Activated CD4-positive, alpha-beta memory T cell treated with anti-CD3 and anti-CD28 coated beads for 36 hours (primary cell): ENCODE measurements at regions of chr7 and their contacts with region 1.

Region 1: DNA sequence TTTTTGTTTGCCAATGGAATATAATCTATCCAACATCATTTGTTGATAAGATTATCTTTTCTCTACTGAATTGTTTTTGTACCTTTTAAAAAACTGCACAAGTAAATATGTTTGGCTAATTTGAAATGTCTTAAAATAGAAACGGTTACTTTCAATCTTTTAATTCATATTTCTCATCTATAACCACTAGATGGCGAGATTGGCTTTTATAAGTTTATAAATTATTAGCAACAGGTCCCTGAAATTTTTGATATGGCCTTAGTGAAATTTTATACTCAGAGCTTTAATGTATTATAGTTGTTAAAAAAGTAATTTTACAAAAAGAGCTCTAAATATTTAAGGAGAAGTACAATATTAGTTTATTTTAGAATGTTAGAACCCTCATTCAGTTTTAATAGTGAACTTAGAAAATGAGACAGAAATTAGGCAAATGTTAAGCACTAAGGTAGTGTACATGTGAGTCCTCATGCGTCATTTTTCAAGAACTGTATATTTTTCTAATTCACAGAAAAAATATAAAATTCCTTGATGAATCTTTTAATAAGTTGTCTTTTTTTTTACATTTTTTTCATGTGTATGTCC is 592.5 kb downstream of the ARL4A start:
- DNase-seq: no peak
- H3K4me3 Mint-ChIP-seq: no peak overlapping the region
- H3K27ac Mint-ChIP-seq: no peak overlapping the region
- H3K4me1 Mint-ChIP-seq: no peaks in the 10 kb centered on the region
- H3K27me3 Mint-ChIP-seq: peaks cover 8% of the 10 kb centered on the region

Region 2: DNA sequence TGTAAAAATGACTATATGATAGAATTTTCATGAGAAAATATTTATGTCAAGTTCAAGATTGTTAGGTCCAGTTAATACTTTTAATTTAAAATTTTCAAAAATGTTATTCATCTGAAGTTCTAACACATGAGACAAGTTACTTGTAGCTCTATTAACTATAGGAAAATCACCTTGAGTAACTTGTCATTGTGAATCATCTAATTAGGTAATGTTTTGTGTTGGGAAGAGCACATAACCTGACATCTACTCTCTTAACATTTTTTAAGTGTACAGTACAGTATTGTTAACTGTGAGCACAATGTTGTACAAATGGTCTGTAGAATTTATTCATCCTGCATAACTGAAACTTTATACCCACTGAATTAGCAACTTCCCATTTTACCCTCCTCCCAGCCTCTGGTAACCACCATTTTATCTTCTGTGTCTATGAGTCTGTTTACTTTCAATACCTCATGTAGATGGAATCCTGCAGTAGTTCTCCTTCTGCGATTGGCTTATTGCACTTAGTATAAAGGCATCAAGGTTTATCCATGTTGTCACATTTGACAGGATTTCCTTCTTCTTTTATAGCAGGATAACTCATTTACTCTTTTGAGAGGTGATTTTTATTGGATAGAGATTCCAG is 537.9 kb before region 1 on chr7:
- CTCF ChIA-PET with region 1: no interaction called
- POLR2A ChIA-PET with region 1: no interaction called
- intact Hi-C with region 1: no loop called
- DNase-seq: no peak
- H3K4me3 Mint-ChIP-seq: no peak overlapping the region
- H3K27ac Mint-ChIP-seq: no peak overlapping the region
- H3K4me1 Mint-ChIP-seq: no peaks in the 10 kb centered on the region
- H3K27me3 Mint-ChIP-seq: no peaks in the 10 kb centered on the region

Region 3: DNA sequence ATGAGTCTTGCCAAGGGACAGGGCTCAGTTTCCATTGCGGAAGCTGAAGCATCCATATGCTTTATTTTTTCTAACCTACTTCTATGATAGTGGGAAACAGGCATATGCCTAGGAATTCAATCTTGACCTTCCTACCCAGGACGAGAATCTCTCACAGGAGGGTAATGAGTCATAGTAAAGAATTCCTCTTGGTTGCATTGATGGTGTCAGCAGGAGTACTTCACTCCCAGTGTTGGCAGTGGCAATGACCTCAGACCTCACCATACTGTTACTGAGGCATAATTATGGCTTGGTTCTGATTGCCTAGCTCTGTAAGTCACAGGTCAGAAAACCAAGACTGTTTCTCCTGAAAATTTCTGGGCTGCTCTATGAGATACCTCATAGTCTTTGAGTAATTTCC is 39.6 kb before region 1 on chr7:
- CTCF ChIA-PET with region 1: no interaction called
- POLR2A ChIA-PET with region 1: no interaction called
- intact Hi-C with region 1: no loop called
- DNase-seq: no peak
- H3K4me3 Mint-ChIP-seq: no peak overlapping the region
- H3K27ac Mint-ChIP-seq: no peak overlapping the region
- H3K4me1 Mint-ChIP-seq: no peaks in the 10 kb centered on the region
- H3K27me3 Mint-ChIP-seq: no peaks in the 10 kb centered on the region

Region 4: GRCh38 chr7:13742811-13743210 is 462.9 kb after region 1 on chr7:
- CTCF ChIA-PET with region 1: interaction called, 8 read pairs
- POLR2A ChIA-PET with region 1: no interaction called
- intact Hi-C with region 1: loop called (anchors 5 kb)
- DNase-seq: peak; percentile 17
- H3K4me3 Mint-ChIP-seq: no peak overlapping the region
- H3K27ac Mint-ChIP-seq: no peak overlapping the region
- H3K4me1 Mint-ChIP-seq: no peaks in the 10 kb centered on the region
- H3K27me3 Mint-ChIP-seq: no peaks in the 10 kb centered on the region

Region 5: GRCh38 chr7:14457568-14458453 is 1177.9 kb after region 1 on chr7:
- CTCF ChIA-PET with region 1: interaction called, 10 read pairs
- POLR2A ChIA-PET with region 1: no interaction called
- intact Hi-C with region 1: loop called (anchors 1 kb)
- DNase-seq: peak; percentile 49
- H3K4me3 Mint-ChIP-seq: no peak overlapping the region
- H3K27ac Mint-ChIP-seq: no peak overlapping the region
- H3K4me1 Mint-ChIP-seq: no peaks in the 10 kb centered on the region
- H3K27me3 Mint-ChIP-seq: peaks cover 5% of the 10 kb centered on the region

Region 6: GRCh38 chr7:14691597-14692203 is 1411.8 kb after region 1 on chr7:
- CTCF ChIA-PET with region 1: interaction called, 44 read pairs
- POLR2A ChIA-PET with region 1: no interaction called
- intact Hi-C with region 1: loop called (anchors 1 kb)
- DNase-seq: peak; percentile 53
- H3K4me3 Mint-ChIP-seq: no peak overlapping the region
- H3K27ac Mint-ChIP-seq: no peak overlapping the region
- H3K4me1 Mint-ChIP-seq: no peaks in the 10 kb centered on the region
- H3K27me3 Mint-ChIP-seq: peaks cover 8% of the 10 kb centered on the region